Activated T-helper 1 cell treated with anti-CD3 and anti-CD28 coated beads, Interleukin-12 subunit alpha, Interleukin-12 subunit beta, Interleukin-2, Interleukin-4 antibody, amounts not matched to agents 30 ng/mL and 10 ng/mL and 1 ng/mL, durations not matched to agents 14 hours and 24 hours and 36 hours (primary cell): ENCODE measurements at regions of chr9 and their contacts with region 1.

Region 1: GRCh38 chr9:134099123-134099787 is 31.4 kb upstream of the BRD3 start:
- DNase-seq: peak; percentile 36
- H3K4me3 Mint-ChIP-seq: no peak overlapping the region
- H3K27ac Mint-ChIP-seq: peak overlapping the region; percentile 33
- H3K4me1 Mint-ChIP-seq: no peaks in the 10 kb centered on the region
- H3K27me3 Mint-ChIP-seq: peaks cover 7% of the 10 kb centered on the region

Region 2: DNA sequence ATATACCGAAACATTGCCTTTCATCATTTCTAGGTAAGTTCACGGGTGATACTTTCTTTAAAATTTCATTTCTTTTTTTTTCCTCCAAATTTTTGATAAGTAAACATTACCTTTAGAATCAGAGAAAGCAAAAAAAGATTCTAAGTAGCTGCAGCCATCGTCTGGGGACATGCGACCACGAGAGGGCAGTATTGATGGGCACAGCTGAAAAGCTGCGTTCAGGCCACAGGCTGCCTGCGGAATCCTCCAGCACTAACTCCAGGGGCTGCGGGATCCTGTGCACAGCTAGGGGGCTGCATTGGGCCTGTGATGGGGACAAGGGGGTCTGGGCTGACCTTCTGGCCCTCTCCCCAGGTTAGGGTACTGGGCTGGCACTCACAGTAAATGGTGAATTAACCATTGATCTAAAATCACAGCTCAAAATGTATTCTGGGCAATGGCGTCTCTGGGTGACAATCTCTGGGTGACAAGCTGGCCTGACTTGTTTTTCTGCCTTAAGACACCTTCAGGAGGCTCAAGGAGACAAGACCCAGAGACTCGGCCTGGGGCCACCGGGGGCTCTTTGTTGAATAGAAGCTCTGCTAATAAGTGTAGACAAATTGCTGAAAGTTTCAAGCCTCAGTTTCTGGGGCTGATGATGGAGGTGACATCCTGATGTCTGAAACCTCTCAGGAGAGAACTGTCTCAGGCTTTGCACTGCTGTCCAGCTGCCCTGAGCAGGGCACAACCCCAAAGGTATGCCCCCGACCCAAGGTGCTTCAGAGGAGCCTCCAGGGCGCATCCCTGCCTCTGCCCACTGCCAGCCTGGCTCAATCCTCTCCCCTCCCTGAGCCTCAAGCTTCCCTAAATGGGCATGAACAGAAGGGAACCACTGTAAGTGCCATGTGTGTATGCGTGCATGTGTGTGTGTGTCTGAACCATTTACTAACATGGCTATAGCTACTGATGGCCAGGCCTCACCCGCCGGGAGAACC is 316.8 kb before region 1 on chr9:
- intact Hi-C with region 1: loop called (anchors 1 kb)
- DNase-seq: peak; percentile 34
- H3K4me3 Mint-ChIP-seq: no peak overlapping the region
- H3K27ac Mint-ChIP-seq: no peak overlapping the region
- H3K4me1 Mint-ChIP-seq: no peaks in the 10 kb centered on the region
- H3K27me3 Mint-ChIP-seq: no peaks in the 10 kb centered on the region

Region 3: DNA sequence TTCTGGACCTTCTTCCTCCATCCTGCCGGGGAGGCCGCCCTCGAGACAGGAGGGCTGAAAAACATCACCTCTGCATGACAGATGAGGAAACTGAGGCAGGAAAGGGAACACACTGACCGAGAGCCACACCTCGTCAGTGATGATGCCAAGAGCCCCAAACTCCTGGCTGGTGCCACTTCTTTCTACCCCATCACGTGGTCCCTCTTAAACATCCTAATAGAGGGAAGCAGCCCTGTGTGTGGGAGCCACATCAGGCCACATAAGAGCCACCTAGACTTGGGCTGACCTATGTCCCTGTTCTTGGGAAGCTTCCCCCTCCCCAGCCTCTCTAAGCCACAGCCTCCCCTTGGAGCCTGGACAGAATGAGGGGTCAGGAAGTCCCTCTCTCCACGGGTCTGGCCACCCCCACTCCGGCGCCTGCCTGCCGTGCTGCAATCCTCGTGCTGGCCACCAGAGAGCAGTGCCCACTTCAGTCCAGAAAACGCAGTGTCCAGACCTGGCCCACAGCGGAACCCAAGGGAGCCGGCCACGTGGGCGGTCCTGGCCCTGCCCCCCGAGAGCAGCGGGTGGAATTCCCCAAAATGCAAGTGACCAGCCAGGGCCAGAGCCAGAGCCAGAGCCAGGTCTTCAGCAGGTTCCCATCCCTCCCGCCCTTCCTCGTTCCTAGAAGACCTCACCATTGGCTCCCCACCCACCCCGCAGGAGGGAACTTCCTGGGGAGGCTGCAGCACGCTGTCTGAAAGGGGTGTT is 306.4 kb before region 1 on chr9:
- intact Hi-C with region 1: loop called (anchors 1 kb)
- DNase-seq: peak; percentile 29
- H3K4me3 Mint-ChIP-seq: no peak overlapping the region
- H3K27ac Mint-ChIP-seq: no peak overlapping the region
- H3K4me1 Mint-ChIP-seq: no peaks in the 10 kb centered on the region
- H3K27me3 Mint-ChIP-seq: no peaks in the 10 kb centered on the region

Region 4: GRCh38 chr9:133897648-133898047 is 201.6 kb before region 1 on chr9:
- intact Hi-C with region 1: no loop called
- DNase-seq: no peak
- H3K4me3 Mint-ChIP-seq: no peak overlapping the region
- H3K27ac Mint-ChIP-seq: no peak overlapping the region
- H3K4me1 Mint-ChIP-seq: no peaks in the 10 kb centered on the region
- H3K27me3 Mint-ChIP-seq: no peaks in the 10 kb centered on the region

Region 5: DNA sequence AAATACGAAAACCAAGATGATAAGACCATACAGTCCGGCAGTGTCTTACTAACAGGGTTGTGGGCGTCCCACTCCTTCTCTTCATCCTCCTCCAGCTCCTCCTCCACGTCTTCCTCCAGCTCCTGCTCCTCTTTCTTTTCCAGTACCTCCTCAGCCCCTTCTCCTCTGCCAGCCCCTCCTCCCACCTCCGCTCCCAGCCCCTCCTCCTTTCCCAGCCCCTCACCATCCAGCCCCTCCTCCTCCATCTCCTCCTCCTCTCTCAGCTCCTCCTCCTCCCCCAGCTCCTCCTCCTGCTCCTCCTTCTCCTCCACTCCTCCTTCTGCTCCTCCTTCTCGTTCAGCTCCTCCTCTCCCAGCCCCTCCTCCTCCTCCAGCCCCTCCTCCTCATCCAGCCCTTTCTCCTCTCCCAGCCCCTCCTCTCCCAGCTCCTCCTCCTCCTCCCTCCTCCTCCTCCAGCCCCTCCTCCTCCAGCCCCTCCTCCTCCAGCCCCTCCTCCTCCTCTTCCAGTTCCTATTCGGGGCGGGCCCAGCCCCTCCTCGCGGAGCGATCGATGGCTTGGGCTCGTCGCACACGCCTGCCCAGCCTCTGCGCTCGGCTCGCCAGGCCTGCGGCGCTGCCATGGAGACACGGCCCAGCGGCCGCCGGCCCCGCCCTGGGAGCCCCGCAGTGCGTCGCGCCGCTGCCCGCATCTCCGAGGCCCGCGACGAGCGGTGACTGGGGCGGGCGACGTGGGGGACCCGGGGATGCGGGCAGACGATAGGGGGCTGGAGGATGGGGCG is 74.2 kb before region 1 on chr9 and contains the start of gene BRD3OS:
- intact Hi-C with region 1: loop called (anchors 1 kb)
- DNase-seq: peak; percentile 92
- H3K4me3 Mint-ChIP-seq: peak within 1 kb of the TSS; percentile 79
- H3K27ac Mint-ChIP-seq: no peak within 1 kb of the TSS
- H3K4me1 Mint-ChIP-seq: no peaks in the 10 kb centered on the region
- H3K27me3 Mint-ChIP-seq: no peaks in the 10 kb centered on the region
- total RNA-seq, gene BRD3OS: 12.3 and 14.5 TPM in 2 replicates